Natural killer cell (primary cell): ENCODE measurements at regions of chr5 and their contacts with region 1.

Region 1: GRCh38 chr5:119309326-119309725 is 46.5 kb upstream of the TNFAIP8 start:
- DNase-seq: peak in 1 of 2 donors; percentile 51
- ATAC-seq: peak; percentile 9 to 16 (median 15)
- H3K4me3 ChIP-seq: no peak overlapping the region
- H3K4me3 Mint-ChIP-seq: peak overlapping the region; percentile 91
- H3K27ac ChIP-seq: peak overlapping the region; percentile 61
- H3K27ac Mint-ChIP-seq: peak overlapping the region; percentile 93 to 98
- H3K4me1 ChIP-seq: peaks cover 56% of the 10 kb centered on the region
- H3K4me1 Mint-ChIP-seq: peaks cover 76% of the 10 kb centered on the region in 2 donors
- H3K27me3 ChIP-seq: no peaks in the 10 kb centered on the region
- H3K27me3 Mint-ChIP-seq: no peaks in the 10 kb centered on the region
- CTCF ChIP-seq: no peak

Region 2: DNA sequence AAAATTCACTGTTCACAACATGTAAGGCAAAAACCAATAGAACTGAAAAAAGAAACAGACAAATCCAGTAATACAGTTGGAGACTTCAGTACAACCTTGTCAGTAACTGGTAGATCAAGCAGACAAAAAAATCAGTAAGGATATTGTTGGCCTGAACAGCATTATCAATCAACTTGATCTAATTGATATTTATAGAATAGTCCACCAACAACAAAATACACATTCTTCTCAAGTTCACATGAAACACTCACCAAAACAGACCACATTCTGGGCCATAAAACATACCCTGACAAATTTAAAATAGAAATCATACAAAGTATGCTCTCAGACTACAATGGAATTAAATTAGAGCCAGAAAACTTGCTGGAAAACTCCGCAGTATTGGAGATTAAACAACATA is 377.8 kb before region 1 on chr5:
- intact Hi-C with region 1: no loop called
- DNase-seq: no peak
- ATAC-seq: no peak
- H3K4me3 ChIP-seq: no peak overlapping the region
- H3K4me3 Mint-ChIP-seq: no peak overlapping the region
- H3K27ac ChIP-seq: no peak overlapping the region
- H3K27ac Mint-ChIP-seq: no peak overlapping the region
- H3K4me1 ChIP-seq: no peaks in the 10 kb centered on the region
- H3K4me1 Mint-ChIP-seq: no peaks in the 10 kb centered on the region
- H3K27me3 ChIP-seq: no peaks in the 10 kb centered on the region
- H3K27me3 Mint-ChIP-seq: no peaks in the 10 kb centered on the region
- CTCF ChIP-seq: no peak

Region 3: DNA sequence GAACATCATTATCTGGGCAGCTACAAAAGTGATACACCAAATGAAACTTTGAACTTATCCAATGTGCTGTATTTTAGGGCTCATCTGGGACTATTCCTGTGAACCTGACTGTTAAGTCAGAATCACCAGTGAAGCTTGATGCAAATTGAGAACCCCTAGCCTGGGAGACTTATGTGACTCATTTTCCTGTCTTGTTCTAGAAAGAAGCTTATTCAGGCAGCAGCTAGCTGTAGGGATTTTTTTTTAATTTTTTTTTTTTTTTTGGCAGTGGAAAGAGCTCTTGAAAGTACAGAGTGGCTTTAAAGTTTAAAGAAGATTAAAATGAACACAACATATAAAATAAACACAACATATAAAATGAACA is 34.6 kb before region 1 on chr5:
- intact Hi-C with region 1: loop called (anchors 2 kb)
- DNase-seq: peak in 1 of 2 donors; percentile 70
- ATAC-seq: peak in 2 of 3 donors; percentile 20 to 41
- H3K4me3 ChIP-seq: no peak overlapping the region
- H3K4me3 Mint-ChIP-seq: peak overlapping the region; percentile 97
- H3K27ac ChIP-seq: peak overlapping the region; percentile 71
- H3K27ac Mint-ChIP-seq: peak overlapping the region; percentile 89 to 98
- H3K4me1 ChIP-seq: peaks cover 87% of the 10 kb centered on the region
- H3K4me1 Mint-ChIP-seq: peaks cover 97% of the 10 kb centered on the region in 2 donors
- H3K27me3 ChIP-seq: no peaks in the 10 kb centered on the region
- H3K27me3 Mint-ChIP-seq: no peaks in the 10 kb centered on the region
- CTCF ChIP-seq: no peak

Region 4: DNA sequence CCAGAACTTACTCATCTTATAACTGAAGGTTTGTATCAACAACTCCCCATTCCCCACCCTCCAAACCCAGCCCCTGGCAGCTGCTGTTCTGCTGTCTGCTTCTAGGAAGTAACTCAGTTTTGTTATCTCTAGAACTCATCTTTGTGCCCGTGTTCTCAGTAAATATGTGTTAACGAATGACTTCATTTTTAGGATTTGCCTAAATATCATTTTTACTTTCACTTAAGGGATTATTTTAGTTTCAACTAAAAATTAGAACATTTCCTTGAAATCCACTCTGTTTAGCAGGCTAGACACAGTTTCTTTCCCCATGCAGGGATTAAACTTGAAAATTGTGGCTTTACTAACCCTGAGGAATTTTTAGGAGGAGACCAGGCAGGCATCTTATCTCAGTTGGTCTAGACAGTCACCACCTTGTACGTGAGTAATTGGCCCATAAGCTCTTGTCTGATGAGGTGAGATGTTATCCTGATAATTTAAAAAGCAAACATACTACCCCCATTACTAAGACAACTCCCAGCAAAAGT is 21.7 kb before region 1 on chr5:
- intact Hi-C with region 1: loop called (anchors 2 kb)
- DNase-seq: peak in 1 of 2 donors; percentile 71
- ATAC-seq: peak; percentile 68 to 77 (median 75)
- H3K4me3 ChIP-seq: no peak overlapping the region
- H3K4me3 Mint-ChIP-seq: peak overlapping the region; percentile 78
- H3K27ac ChIP-seq: peak overlapping the region; percentile 77
- H3K27ac Mint-ChIP-seq: peak overlapping the region; percentile 89
- H3K4me1 ChIP-seq: peaks cover 59% of the 10 kb centered on the region
- H3K4me1 Mint-ChIP-seq: peaks cover 93% of the 10 kb centered on the region in 2 donors
- H3K27me3 ChIP-seq: no peaks in the 10 kb centered on the region
- H3K27me3 Mint-ChIP-seq: no peaks in the 10 kb centered on the region
- CTCF ChIP-seq: no peak

Region 5: DNA sequence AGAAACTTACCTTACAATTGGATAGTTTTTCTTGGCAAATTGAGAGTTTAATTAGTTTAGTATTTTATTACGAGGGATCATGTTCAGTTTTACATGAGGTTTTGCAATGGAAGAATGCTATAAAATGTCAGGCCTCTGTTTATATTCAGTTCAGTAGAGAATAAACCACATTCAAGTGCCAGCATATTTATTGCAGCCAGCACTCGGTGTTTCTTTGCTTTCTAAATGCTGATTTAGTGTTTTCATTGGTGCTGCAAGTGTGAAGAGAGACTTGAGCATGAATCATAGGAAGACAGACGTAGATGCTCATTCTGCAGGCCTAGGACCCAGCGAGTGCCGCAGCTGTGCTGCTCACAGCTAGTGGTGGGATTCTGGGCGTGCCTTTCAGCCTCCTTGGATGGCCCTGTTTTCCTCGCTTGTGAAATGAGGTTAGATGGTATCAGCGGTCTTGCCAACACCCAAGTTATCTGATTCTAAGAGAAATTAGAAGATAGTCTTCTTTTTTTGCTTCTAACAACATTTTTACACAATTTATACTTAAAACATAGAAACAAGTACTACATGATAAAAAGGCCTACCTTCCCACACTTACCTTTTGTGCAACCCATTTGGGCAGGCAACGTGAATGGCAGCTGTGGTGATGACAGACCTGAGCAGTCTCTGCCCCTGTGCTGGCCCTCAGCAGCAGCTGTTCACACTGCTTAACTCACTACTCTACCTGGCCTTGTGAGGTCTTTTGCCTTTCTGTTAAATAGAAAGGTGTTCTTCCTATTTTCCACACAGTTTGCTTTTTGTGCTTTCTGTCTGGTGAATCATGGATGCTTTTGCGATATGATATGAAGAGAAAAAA is 19.7 kb after region 1 on chr5:
- intact Hi-C with region 1: loop called (anchors 2 kb)
- DNase-seq: peak; percentile 48 to 82
- ATAC-seq: peak; percentile 74 to 76 (median 75)
- H3K4me3 ChIP-seq: no peak overlapping the region
- H3K4me3 Mint-ChIP-seq: peak overlapping the region; percentile 70
- H3K27ac ChIP-seq: peak overlapping the region; percentile 62
- H3K27ac Mint-ChIP-seq: peak overlapping the region; percentile 86 to 88
- H3K4me1 ChIP-seq: peaks cover 71% of the 10 kb centered on the region
- H3K4me1 Mint-ChIP-seq: peaks cover 80 to 87% of the 10 kb centered on the region in 2 donors
- H3K27me3 ChIP-seq: no peaks in the 10 kb centered on the region
- H3K27me3 Mint-ChIP-seq: no peaks in the 10 kb centered on the region
- CTCF ChIP-seq: no peak

Region 6: DNA sequence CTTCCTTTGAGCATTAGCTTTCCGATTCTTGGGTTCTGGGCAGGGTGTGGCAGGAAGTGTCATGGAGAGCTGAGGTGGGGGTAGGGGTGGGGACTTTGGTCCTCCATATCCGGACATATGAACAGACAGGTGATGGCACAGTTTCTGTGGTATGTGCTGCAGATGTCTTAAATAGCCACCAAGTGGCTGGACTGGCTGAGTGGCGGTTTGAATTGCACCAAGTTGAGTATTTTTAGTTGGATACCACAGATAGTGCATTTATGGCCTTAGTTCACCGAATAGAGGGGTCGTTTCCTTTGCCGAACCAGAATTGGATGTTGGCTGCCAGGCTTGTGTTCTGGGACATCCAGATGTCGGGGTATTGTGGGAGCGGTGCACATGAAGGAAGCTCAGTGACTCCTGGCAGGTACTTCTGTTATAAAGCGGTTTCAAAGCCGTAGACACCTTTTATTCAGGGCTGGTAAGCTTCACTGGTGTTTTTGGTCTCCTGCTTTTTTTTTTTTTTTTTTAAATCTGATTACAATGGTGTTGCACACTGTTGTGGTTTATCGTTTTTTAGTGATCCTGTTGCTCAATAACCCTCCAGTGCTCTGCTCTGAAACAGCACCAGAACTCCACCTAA is 31.4 kb after region 1 on chr5:
- intact Hi-C with region 1: loop called (anchors 2 kb)
- DNase-seq: peak in 1 of 2 donors; percentile 78
- ATAC-seq: peak; percentile 32 to 54 (median 46)
- H3K4me3 ChIP-seq: peak overlapping the region; percentile 2
- H3K4me3 Mint-ChIP-seq: peak overlapping the region; percentile 93
- H3K27ac ChIP-seq: peak overlapping the region; percentile 70
- H3K27ac Mint-ChIP-seq: peak overlapping the region; percentile 86 to 88
- H3K4me1 ChIP-seq: peaks cover 73% of the 10 kb centered on the region
- H3K4me1 Mint-ChIP-seq: peaks cover 93 to 96% of the 10 kb centered on the region in 2 donors
- H3K27me3 ChIP-seq: no peaks in the 10 kb centered on the region
- H3K27me3 Mint-ChIP-seq: no peaks in the 10 kb centered on the region
- CTCF ChIP-seq: no peak